Sigmoid colon (tissue), 7 donors: ENCODE measurements at regions of chr4 and their contacts with region 1.

Region 1: GRCh38 chr4:158161551-158162354 is 11.1 kb downstream of the GASK1B start:
- DNase-seq: peak; percentile 75
- H3K4me3 ChIP-seq: no peak overlapping the region
- H3K27ac ChIP-seq: peak overlapping the region; percentile 60 to 92 (median 72)
- H3K4me1 ChIP-seq: peaks cover 5 to 98% (median 88%) of the 10 kb centered on the region in 4 donors
- H3K27me3 ChIP-seq: no peaks in the 10 kb centered on the region
- CTCF ChIP-seq: no peak
- EP300 ChIP-seq: peak in 2 of 4 donors; percentile 7 to 54
- POLR2A ChIP-seq: no peak

Region 2: GRCh38 chr4:158121187-158121586 is 40.6 kb before region 1 on chr4:
- intact Hi-C with region 1: loop called (anchors 5 kb)
- DNase-seq: peak; percentile 79
- H3K4me3 ChIP-seq: peak overlapping the region in 3 of 4 donors; percentile 1 to 22 (median 5)
- H3K27ac ChIP-seq: peak overlapping the region; percentile 39 to 77 (median 72)
- H3K4me1 ChIP-seq: peaks cover 0 to 46% (median 26%) of the 10 kb centered on the region in 4 donors
- H3K27me3 ChIP-seq: no peaks in the 10 kb centered on the region
- CTCF ChIP-seq: no peak
- EP300 ChIP-seq: peak in 2 of 4 donors; percentile 39 to 49
- POLR2A ChIP-seq: no peak

Region 3: GRCh38 chr4:158796370-158797140 is 634.8 kb after region 1 on chr4:
- intact Hi-C with region 1: no loop called
- DNase-seq: no peak
- H3K4me3 ChIP-seq: no peak overlapping the region
- H3K27ac ChIP-seq: no peak overlapping the region
- H3K4me1 ChIP-seq: peaks cover 0 to 43% (median 22%) of the 10 kb centered on the region in 4 donors
- H3K27me3 ChIP-seq: no peaks in the 10 kb centered on the region
- CTCF ChIP-seq: no peak
- EP300 ChIP-seq: no peak
- POLR2A ChIP-seq: no peak